ENCODE measurements at regions of chr10 and their contacts with region 1.

Region 1: GRCh38 chr10:92290837-92291615 is at the starts of genes CPEB3 and MARCHF5:
- DNase-seq: peak; percentile 77
- ATAC-seq: peak; percentile 97
- H3K4me3 ChIP-seq: peak within 1 kb of the TSS; percentile 96
- H3K27ac ChIP-seq: peak within 1 kb of the TSS; percentile 79
- H3K4me1 ChIP-seq: peaks cover 3% of the 10 kb centered on the region; the same call in 1 of the 2 replicates
- H3K27me3 ChIP-seq: no peaks in the 10 kb centered on the region
- CTCF ChIP-seq: peak; percentile 41 to 52 (median 51)
- EP300 ChIP-seq: no peak
- POLR2A ChIP-seq: peak; percentile 81
- RAD21 ChIP-seq: peak; percentile 28
- polyA plus RNA-seq, gene CPEB3: 0.50 to 0.53 TPM
- polyA plus RNA-seq, gene MARCHF5: 4.8 to 5.8 TPM

Region 2: GRCh38 chr10:92103376-92104090 is 187.5 kb before region 1 on chr10:
- CTCF ChIA-PET with region 1: interaction called, 18 read pairs
- POLR2A ChIA-PET with region 1: interaction called, 4 read pairs
- RAD21 ChIA-PET with region 1: interaction called, 50 read pairs
- SMC1A ChIA-PET with region 1: interaction called, 36 read pairs
- in situ Hi-C with region 1: no loop called
- intact Hi-C with region 1: loop called (anchors 5 kb)
- DNase-seq: no peak
- ATAC-seq: no peak
- H3K4me3 ChIP-seq: no peak overlapping the region
- H3K27ac ChIP-seq: no peak overlapping the region
- H3K4me1 ChIP-seq: peaks cover 30% of the 10 kb centered on the region
- H3K27me3 ChIP-seq: no peaks in the 10 kb centered on the region
- CTCF ChIP-seq: no peak
- EP300 ChIP-seq: no peak
- POLR2A ChIP-seq: no peak
- RAD21 ChIP-seq: no peak

Region 3: DNA sequence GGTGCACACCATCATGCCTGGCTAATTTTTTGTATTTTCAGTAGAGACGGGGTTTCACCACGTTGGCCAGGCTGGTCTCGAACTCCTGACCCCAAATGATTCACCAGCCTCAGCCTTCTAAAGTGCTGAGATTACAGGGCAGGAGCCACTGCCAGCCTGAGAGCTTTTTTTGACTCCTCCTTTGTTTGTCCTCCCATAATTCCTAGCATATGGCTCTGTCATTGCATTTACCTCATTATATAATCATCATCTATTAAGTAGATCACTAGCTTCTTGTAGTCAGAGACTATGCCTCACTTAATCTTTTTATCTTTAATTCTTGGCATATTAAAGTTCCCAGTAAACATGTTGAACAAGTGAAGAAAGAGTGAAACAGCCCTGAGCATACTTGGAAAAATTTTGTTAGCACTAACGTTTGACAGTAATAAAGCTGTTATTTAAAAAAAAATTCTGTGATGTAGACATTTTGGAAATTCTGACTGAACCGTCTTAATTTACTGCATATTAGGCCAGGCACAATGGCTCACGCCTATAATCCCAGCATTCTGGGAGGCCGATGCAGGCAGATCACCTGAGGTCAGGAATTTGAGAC is 82.2 kb before region 1 on chr10:
- CTCF ChIA-PET with region 1: interaction called, 21 read pairs
- POLR2A ChIA-PET with region 1: interaction called, 7 read pairs
- RAD21 ChIA-PET with region 1: interaction called, 37 read pairs
- SMC1A ChIA-PET with region 1: interaction called, 6 read pairs
- in situ Hi-C with region 1: no loop called
- intact Hi-C with region 1: no loop called
- DNase-seq: no peak
- ATAC-seq: no peak
- H3K4me3 ChIP-seq: no peak overlapping the region
- H3K27ac ChIP-seq: no peak overlapping the region
- H3K4me1 ChIP-seq: peaks cover 19% of the 10 kb centered on the region
- H3K27me3 ChIP-seq: no peaks in the 10 kb centered on the region
- CTCF ChIP-seq: no peak
- EP300 ChIP-seq: no peak
- POLR2A ChIP-seq: no peak
- RAD21 ChIP-seq: no peak

Region 4: GRCh38 chr10:92278996-92279696 is 11.9 kb before region 1 on chr10:
- CTCF ChIA-PET with region 1: interaction called, 6 read pairs
- POLR2A ChIA-PET with region 1: interaction called, 4 read pairs
- RAD21 ChIA-PET with region 1: no interaction called
- SMC1A ChIA-PET with region 1: interaction called, 19 read pairs
- in situ Hi-C with region 1: no loop called
- intact Hi-C with region 1: no loop called
- DNase-seq: no peak
- ATAC-seq: no peak
- H3K4me3 ChIP-seq: no peak overlapping the region
- H3K27ac ChIP-seq: no peak overlapping the region
- H3K4me1 ChIP-seq: peaks cover 2% of the 10 kb centered on the region; the same call in 1 of the 2 replicates
- H3K27me3 ChIP-seq: no peaks in the 10 kb centered on the region
- CTCF ChIP-seq: no peak
- EP300 ChIP-seq: no peak
- POLR2A ChIP-seq: no peak
- RAD21 ChIP-seq: no peak

Region 5: GRCh38 chr10:92592761-92593618 is 302.0 kb after region 1 on chr10 and contains the start of gene KIF11:
- CTCF ChIA-PET with region 1: interaction called, 3 read pairs
- POLR2A ChIA-PET with region 1: interaction called, 5 read pairs
- RAD21 ChIA-PET with region 1: no interaction called
- SMC1A ChIA-PET with region 1: no interaction called
- in situ Hi-C with region 1: no loop called
- intact Hi-C with region 1: loop called (anchors 5 kb)
- DNase-seq: peak; percentile 88
- ATAC-seq: peak; percentile 81
- H3K4me3 ChIP-seq: peak within 1 kb of the TSS; percentile 88
- H3K27ac ChIP-seq: peak within 1 kb of the TSS; percentile 95
- H3K4me1 ChIP-seq: peaks cover 7% of the 10 kb centered on the region
- H3K27me3 ChIP-seq: no peaks in the 10 kb centered on the region
- CTCF ChIP-seq: no peak
- EP300 ChIP-seq: peak in 1 of 2 experiments; percentile 10; a peak in 1 of 4 replicates
- POLR2A ChIP-seq: peak; percentile 88
- RAD21 ChIP-seq: no peak
- polyA plus RNA-seq, gene KIF11: 14.1 to 17.9 TPM

Measured in GM12878 (cell line).